ENCODE measurements at regions of chr6 and their contacts with region 1.

Region 1: GRCh38 chr6:73610444-73611275 is 43.1 kb downstream of the SLC17A5 start:
- DNase-seq: no peak

Region 2: DNA sequence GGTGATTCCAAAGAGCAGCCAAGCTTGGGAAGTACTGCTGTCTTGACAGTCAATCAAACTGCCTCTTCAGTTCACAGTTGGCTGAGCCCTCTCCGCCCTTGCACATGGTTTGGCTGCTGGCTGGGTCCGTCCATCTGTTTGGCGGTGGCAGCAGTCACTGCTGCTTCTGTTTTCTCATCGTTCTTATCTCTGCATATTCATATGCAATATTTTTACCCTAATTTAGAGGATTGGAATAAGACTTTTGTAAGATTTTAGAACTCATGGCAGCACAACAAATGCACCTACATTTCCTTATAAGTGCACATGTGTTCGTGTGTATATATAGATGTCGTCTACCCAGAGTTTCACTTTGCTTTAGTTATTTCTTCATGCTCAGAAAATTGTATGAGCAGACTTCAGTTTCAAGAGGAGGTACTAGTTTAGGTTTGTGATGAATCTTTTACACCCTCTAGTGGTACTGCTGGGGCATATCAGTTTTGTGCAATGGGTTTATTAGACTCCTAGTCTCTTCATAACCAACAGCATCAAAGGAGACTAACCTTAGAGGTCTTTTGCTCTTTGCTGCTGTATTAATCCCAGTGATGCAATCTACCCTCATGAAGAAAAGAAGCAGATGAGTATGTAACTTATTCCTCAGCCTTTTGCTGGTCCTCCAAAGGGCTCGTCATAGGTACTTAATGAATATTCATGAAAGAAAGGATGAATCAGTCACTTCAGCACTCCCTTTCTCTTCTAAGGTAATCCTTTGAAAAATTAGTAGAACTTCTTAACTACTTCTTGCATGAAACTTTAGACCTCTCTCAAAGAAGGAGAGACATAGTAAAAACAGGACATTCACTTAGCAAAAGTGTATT is 429.7 kb before region 1 on chr6:
- intact Hi-C with region 1: loop called in 1 of 2 experiments (anchors 5 kb)
- DNase-seq: no peak

Region 3: GRCh38 chr6:73514746-73515110 is 95.9 kb before region 1 on chr6:
- intact Hi-C with region 1: loop called (anchors 5 kb)
- DNase-seq: no peak

Region 4: DNA sequence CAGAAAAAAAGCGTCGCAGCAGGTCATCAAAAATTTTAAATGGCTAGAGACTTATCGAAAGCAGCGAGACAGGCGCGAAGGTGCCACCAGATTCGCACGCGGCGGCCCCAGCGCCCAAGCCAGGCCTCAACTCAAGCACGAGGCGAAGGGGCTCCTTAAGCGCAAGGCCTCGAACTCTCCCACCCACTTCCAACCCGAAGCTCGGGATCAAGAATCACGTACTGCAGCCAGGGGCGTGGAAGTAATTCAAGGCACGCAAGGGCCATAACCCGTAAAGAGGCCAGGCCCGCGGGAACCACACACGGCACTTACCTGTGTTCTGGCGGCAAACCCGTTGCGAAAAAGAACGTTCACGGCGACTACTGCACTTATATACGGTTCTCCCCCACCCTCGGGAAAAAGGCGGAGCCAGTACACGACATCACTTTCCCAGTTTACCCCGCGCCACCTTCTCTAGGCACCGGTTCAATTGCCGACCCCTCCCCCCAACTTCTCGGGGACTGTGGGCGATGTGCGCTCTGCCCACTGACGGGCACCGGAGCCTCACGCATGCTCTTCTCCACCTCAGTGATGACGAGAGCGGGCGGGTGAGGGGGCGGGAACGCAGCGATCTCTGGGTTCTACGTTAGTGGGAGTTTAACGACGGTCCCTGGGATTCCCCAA is 89.8 kb before region 1 on chr6 and contains the start of gene EEF1A1:
- intact Hi-C with region 1: loop called in 1 of 2 experiments (anchors 5 kb)
- DNase-seq: peak; percentile 100
- total RNA-seq, gene EEF1A1: 7,949 to 8,333 TPM

Region 5: GRCh38 chr6:74050921-74051320 is 440.3 kb after region 1 on chr6:
- intact Hi-C with region 1: no loop called
- DNase-seq: no peak

Measured in posterior vena cava (tissue), 2 donors.